Activated CD4-positive, alpha-beta T cell treated with anti-CD3 and anti-CD28 coated beads, Interleukin-2, amount 10 ng/mL, durations not matched to agents 24 days and 14 days (primary cell): ENCODE measurements at regions of chrX and their contacts with region 1.

Region 1: DNA sequence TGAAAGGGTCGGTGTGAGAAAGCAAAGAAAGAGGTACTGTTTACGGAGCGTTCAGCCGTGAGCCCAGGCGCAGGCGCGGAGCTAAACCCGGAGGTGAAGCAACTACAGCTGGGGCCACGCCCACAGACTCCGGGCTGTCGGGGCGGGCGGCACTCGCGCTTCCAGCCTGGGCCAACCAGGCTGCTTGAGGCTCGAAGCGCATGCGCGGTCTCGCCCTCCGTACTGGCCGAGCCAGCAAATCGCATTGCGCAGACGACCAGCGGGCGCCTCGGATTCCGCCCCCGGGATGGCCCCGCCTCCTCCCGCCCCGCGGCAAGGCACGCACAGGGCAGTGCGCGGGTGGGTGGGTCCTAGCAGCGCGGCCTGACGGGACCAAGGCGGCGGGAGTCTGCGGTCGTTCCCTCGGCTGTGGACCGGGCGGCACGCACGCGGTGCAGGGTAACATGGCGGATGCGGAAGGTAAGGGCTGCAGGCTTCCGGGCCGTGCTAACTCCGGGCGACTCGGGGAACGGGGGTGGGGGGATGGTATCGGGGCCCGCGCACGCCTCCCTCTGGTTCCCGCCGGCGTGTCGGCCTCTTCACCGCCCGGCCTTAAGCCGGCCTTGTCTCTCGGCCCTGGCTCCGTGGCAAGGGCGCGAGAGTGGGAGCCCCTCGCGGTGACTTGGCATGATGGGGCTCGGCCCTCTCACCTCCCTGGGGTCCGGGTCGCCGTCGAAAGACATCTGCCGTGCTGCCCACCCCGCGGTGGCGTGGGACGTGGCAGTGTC is at the start of gene DKC1:
- DNase-seq: peak; percentile 98
- H3K4me3 Mint-ChIP-seq: peak within 1 kb of the TSS; percentile 90
- H3K27ac Mint-ChIP-seq: peak within 1 kb of the TSS; percentile 94
- H3K4me1 Mint-ChIP-seq: peaks cover 18% of the 10 kb centered on the region
- H3K27me3 Mint-ChIP-seq: no peaks in the 10 kb centered on the region
- total RNA-seq, gene DKC1: 183 and 196 TPM in 2 replicates

Region 2: GRCh38 chrX:154799554-154800348 is 37.0 kb after region 1 on chrX:
- intact Hi-C with region 1: loop called (anchors 1 kb)
- DNase-seq: no peak
- H3K4me3 Mint-ChIP-seq: peak overlapping the region; percentile 52
- H3K27ac Mint-ChIP-seq: peak overlapping the region; percentile 94
- H3K4me1 Mint-ChIP-seq: peaks cover 57% of the 10 kb centered on the region
- H3K27me3 Mint-ChIP-seq: no peaks in the 10 kb centered on the region

Region 3: GRCh38 chrX:154804957-154805695 is 42.4 kb after region 1 on chrX and contains the start of gene MPP1:
- intact Hi-C with region 1: loop called (anchors 1 kb)
- DNase-seq: peak; percentile 95
- H3K4me3 Mint-ChIP-seq: peak within 1 kb of the TSS; percentile 89
- H3K27ac Mint-ChIP-seq: peak within 1 kb of the TSS; percentile 74
- H3K4me1 Mint-ChIP-seq: peaks cover 39% of the 10 kb centered on the region
- H3K27me3 Mint-ChIP-seq: no peaks in the 10 kb centered on the region
- total RNA-seq, gene MPP1: 22.4 and 25.6 TPM in 2 replicates

Region 4: GRCh38 chrX:154840856-154841255 is 78.2 kb after region 1 on chrX:
- intact Hi-C with region 1: loop called (anchors 5 kb)
- DNase-seq: peak; percentile 56
- H3K4me3 Mint-ChIP-seq: no peak overlapping the region
- H3K27ac Mint-ChIP-seq: no peak overlapping the region
- H3K4me1 Mint-ChIP-seq: peaks cover 3% of the 10 kb centered on the region
- H3K27me3 Mint-ChIP-seq: peaks cover 4% of the 10 kb centered on the region